Naive thymus-derived CD4-positive, alpha-beta T cell (primary cell): ENCODE measurements at regions of chr19 and their contacts with region 1.

Region 1: DNA sequence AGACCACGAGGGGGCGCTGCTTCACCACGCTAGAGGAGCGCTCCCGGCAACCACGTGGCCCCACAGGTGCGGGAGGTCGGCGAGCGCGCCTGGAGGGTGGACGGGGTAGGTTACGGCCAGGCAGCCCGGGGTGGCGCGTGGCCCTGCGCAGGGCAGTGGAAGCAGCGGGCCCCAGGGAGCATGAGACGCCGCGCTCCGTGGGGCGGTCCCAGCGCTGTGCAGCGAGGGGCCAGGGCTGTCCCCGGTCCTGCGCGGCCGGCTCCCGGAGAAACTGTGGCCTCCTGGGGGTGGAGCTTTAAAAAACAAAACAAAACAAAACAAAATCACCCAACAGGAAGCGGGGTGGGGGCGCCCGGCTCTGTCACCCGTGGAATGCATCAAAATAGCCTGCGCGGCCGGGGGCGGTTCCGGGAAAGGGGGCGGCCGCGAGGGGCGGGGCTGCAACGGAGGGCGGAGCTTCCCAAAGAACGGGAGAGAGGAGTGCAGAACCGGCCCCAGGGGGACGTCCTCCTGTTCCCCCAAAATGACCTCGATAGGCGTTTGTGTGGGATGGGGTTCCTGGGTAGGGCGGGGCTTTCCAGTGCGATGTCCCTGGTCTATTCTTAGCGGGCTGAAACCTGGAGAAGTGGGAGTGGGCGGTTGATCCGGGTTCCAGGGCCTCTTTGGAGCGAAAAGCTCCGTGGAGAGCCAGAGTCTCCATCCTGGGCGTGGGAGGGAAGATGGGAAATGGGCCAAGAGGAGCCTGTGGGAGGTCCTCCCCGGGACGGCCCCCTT is 27.3 kb downstream of the NUMBL start:
- DNase-seq: peak; percentile 81 to 96 (median 92)
- ATAC-seq: peak; percentile 96
- H3K4me3 ChIP-seq: peak overlapping the region; percentile 75
- H3K4me3 Mint-ChIP-seq: peak overlapping the region; percentile 76 to 91 (median 84)
- H3K27ac ChIP-seq: peak overlapping the region; percentile 75
- H3K27ac Mint-ChIP-seq: peak overlapping the region; percentile 67 to 91 (median 84)
- H3K4me1 ChIP-seq: peaks cover 0 to 7% of the 10 kb centered on the region in 2 donors
- H3K4me1 Mint-ChIP-seq: peaks cover 0 to 27% (median 6%) of the 10 kb centered on the region in 7 donors
- H3K27me3 ChIP-seq: no peaks in the 10 kb centered on the region
- H3K27me3 Mint-ChIP-seq: peaks cover 0 to 4% (median 0%) of the 10 kb centered on the region in 5 donors

Region 2: DNA sequence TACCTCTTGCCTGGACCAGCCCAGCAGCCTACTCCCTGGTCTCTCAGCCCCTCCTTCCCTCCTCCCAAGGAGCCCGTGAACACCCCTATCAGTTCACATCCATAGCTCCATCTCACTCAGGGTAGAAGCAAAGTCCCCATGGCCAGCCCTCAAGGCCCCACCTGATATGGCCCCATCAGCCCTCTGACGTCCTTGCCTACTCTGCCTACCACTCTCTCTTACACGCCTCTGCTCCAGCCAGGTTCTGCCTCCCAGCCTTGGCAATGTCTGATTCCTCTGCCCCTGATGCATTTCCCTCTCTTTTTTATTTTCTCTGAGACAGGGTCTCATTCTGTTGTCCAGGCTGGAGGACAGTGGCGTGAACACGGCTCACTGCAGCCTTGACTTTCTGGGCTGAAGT is 211.1 kb before region 1 on chr19:
- CTCF ChIA-PET with region 1: no interaction called
- POLR2A ChIA-PET with region 1: no interaction called
- intact Hi-C with region 1: no loop called
- DNase-seq: no peak
- ATAC-seq: no peak
- H3K4me3 ChIP-seq: no peak overlapping the region
- H3K4me3 Mint-ChIP-seq: peak overlapping the region in 1 of 10 donors; percentile 59
- H3K27ac ChIP-seq: no peak overlapping the region
- H3K27ac Mint-ChIP-seq: no peak overlapping the region
- H3K4me1 ChIP-seq: no peaks in the 10 kb centered on the region
- H3K4me1 Mint-ChIP-seq: peaks cover 0 to 5% (median 0%) of the 10 kb centered on the region in 7 donors
- H3K27me3 ChIP-seq: no peaks in the 10 kb centered on the region
- H3K27me3 Mint-ChIP-seq: no peaks in the 10 kb centered on the region

Region 3: GRCh38 chr19:40613640-40614303 is 49.3 kb before region 1 on chr19:
- CTCF ChIA-PET with region 1: no interaction called
- POLR2A ChIA-PET with region 1: no interaction called
- intact Hi-C with region 1: no loop called
- DNase-seq: peak; percentile 71 to 86 (median 85)
- ATAC-seq: peak; percentile 76
- H3K4me3 ChIP-seq: peak overlapping the region; percentile 96
- H3K4me3 Mint-ChIP-seq: peak overlapping the region; percentile 90 to 97 (median 94)
- H3K27ac ChIP-seq: peak overlapping the region; percentile 78
- H3K27ac Mint-ChIP-seq: peak overlapping the region; percentile 77 to 99 (median 93)
- H3K4me1 ChIP-seq: peaks cover 28 to 37% of the 10 kb centered on the region in 2 donors
- H3K4me1 Mint-ChIP-seq: peaks cover 33 to 57% (median 45%) of the 10 kb centered on the region in 7 donors
- H3K27me3 ChIP-seq: no peaks in the 10 kb centered on the region
- H3K27me3 Mint-ChIP-seq: no peaks in the 10 kb centered on the region

Region 4: GRCh38 chr19:40684280-40684679 is 21.2 kb after region 1 on chr19:
- CTCF ChIA-PET with region 1: no interaction called
- POLR2A ChIA-PET with region 1: no interaction called
- intact Hi-C with region 1: no loop called
- DNase-seq: no peak
- ATAC-seq: no peak
- H3K4me3 ChIP-seq: no peak overlapping the region
- H3K4me3 Mint-ChIP-seq: no peak overlapping the region
- H3K27ac ChIP-seq: no peak overlapping the region
- H3K27ac Mint-ChIP-seq: no peak overlapping the region
- H3K4me1 ChIP-seq: no peaks in the 10 kb centered on the region
- H3K4me1 Mint-ChIP-seq: no peaks in the 10 kb centered on the region
- H3K27me3 ChIP-seq: no peaks in the 10 kb centered on the region
- H3K27me3 Mint-ChIP-seq: no peaks in the 10 kb centered on the region

Region 5: GRCh38 chr19:40777937-40778705 is 115.0 kb after region 1 on chr19 and contains the start of gene RAB4B:
- CTCF ChIA-PET with region 1: interaction called, 4 read pairs
- POLR2A ChIA-PET with region 1: interaction called, 10 read pairs
- intact Hi-C with region 1: loop called in 1 of 2 experiments (anchors 1 kb)
- DNase-seq: peak; percentile 99 to 100 (median 100)
- ATAC-seq: peak; percentile 92
- H3K4me3 ChIP-seq: peak within 1 kb of the TSS; percentile 97
- H3K4me3 Mint-ChIP-seq: peak within 1 kb of the TSS; percentile 91 to 99 (median 96)
- H3K27ac ChIP-seq: peak within 1 kb of the TSS; percentile 92
- H3K27ac Mint-ChIP-seq: peak within 1 kb of the TSS; percentile 87 to 99 (median 98)
- H3K4me1 ChIP-seq: peaks cover 18 to 24% of the 10 kb centered on the region in 2 donors
- H3K4me1 Mint-ChIP-seq: peaks cover 31 to 49% (median 39%) of the 10 kb centered on the region in 7 donors
- H3K27me3 ChIP-seq: no peaks in the 10 kb centered on the region
- H3K27me3 Mint-ChIP-seq: no peaks in the 10 kb centered on the region
- total RNA-seq, gene RAB4B: 37.6 to 63.0 (median 52.5) TPM

Region 6: DNA sequence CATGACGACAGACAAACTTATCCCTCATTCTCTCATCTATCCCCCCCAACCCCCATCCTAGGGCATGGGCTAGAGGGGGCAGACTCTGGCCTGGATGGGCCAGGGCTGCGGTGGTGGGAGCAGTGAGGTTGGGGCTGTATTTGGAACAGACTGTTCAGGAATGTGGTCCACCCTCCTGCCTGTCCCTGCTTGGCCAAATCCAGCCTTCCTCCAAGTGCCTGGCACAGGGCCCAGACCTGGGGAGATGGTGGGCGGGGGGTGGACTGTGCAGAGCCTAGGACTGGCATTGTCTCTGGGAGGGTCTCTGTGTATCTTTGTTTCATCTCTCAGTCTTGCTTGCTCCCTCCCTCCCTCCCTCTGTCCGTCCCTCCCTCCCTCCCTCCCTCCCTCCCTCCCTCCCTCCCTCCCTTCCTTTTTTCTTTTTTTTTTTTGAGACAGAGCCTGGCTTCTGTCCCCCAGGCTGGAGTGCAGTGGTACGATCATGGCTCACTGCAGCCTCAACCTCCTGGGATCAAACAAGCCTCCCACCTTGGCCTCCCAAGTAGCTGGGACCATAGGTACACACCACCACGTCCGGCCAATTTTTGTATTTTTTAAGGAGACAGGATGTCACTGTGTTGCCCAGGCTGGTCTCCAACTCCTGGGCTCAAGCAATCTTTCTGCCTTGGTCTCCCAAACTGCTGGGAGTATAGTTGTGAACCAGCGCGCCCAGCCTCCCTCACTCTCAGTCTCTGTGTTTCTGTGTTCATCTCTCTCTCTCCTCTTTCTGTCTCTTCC is 150.3 kb after region 1 on chr19:
- CTCF ChIA-PET with region 1: interaction called, 28 read pairs
- POLR2A ChIA-PET with region 1: interaction called, 3 read pairs
- intact Hi-C with region 1: no loop called
- DNase-seq: no peak
- ATAC-seq: no peak
- H3K4me3 ChIP-seq: no peak overlapping the region
- H3K4me3 Mint-ChIP-seq: peak overlapping the region in 9 of 10 donors; percentile 9 to 100 (median 91)
- H3K27ac ChIP-seq: no peak overlapping the region
- H3K27ac Mint-ChIP-seq: peak overlapping the region in 5 of 9 donors; percentile 13 to 90 (median 86)
- H3K4me1 ChIP-seq: peaks cover 8 to 20% of the 10 kb centered on the region in 2 donors
- H3K4me1 Mint-ChIP-seq: peaks cover 33 to 55% (median 52%) of the 10 kb centered on the region in 7 donors
- H3K27me3 ChIP-seq: no peaks in the 10 kb centered on the region
- H3K27me3 Mint-ChIP-seq: peaks cover 0 to 42% (median 0%) of the 10 kb centered on the region in 5 donors

Region 7: GRCh38 chr19:40974633-40975037 is 311.5 kb after region 1 on chr19:
- CTCF ChIA-PET with region 1: interaction called, 3 read pairs
- POLR2A ChIA-PET with region 1: no interaction called
- intact Hi-C with region 1: loop called (anchors 1 to 5 kb)
- DNase-seq: peak; percentile 54 to 84 (median 76)
- ATAC-seq: peak; percentile 87
- H3K4me3 ChIP-seq: no peak overlapping the region
- H3K4me3 Mint-ChIP-seq: peak overlapping the region in 1 of 10 donors; percentile 45
- H3K27ac ChIP-seq: no peak overlapping the region
- H3K27ac Mint-ChIP-seq: peak overlapping the region in 3 of 9 donors; percentile 53 to 74 (median 63)
- H3K4me1 ChIP-seq: peaks cover 16 to 19% of the 10 kb centered on the region in 2 donors
- H3K4me1 Mint-ChIP-seq: peaks cover 13 to 53% (median 27%) of the 10 kb centered on the region in 7 donors
- H3K27me3 ChIP-seq: no peaks in the 10 kb centered on the region
- H3K27me3 Mint-ChIP-seq: peaks cover 2 to 38% (median 3%) of the 10 kb centered on the region in 5 donors

Region 8: GRCh38 chr19:41144403-41144802 is 481.3 kb after region 1 on chr19:
- CTCF ChIA-PET with region 1: interaction called, 10 read pairs
- POLR2A ChIA-PET with region 1: interaction called, 3 read pairs
- intact Hi-C with region 1: loop called (anchors 1 kb)
- DNase-seq: peak; percentile 68 to 88 (median 84)
- ATAC-seq: peak; percentile 96
- H3K4me3 ChIP-seq: no peak overlapping the region
- H3K4me3 Mint-ChIP-seq: no peak overlapping the region
- H3K27ac ChIP-seq: no peak overlapping the region
- H3K27ac Mint-ChIP-seq: peak overlapping the region in 4 of 9 donors; percentile 44 to 78 (median 58)
- H3K4me1 ChIP-seq: no peaks in the 10 kb centered on the region
- H3K4me1 Mint-ChIP-seq: peaks cover 0 to 3% (median 0%) of the 10 kb centered on the region in 7 donors
- H3K27me3 ChIP-seq: no peaks in the 10 kb centered on the region
- H3K27me3 Mint-ChIP-seq: peaks cover 0 to 29% (median 15%) of the 10 kb centered on the region in 5 donors